Activated CD8-positive, alpha-beta T cell treated with anti-CD3 and anti-CD28 coated beads for 36 hours (primary cell): ENCODE measurements at regions of chr10 and their contacts with region 1.

Region 1: GRCh38 chr10:100728928-100729861 is 16.2 kb upstream of the PAX2 start:
- DNase-seq: peak; percentile 68
- ATAC-seq: peak; percentile 63
- H3K4me3 Mint-ChIP-seq: peak overlapping the region; percentile 7
- H3K27ac Mint-ChIP-seq: no peak overlapping the region
- H3K4me1 Mint-ChIP-seq: peaks cover 24% of the 10 kb centered on the region
- H3K27me3 Mint-ChIP-seq: peaks cover 80% of the 10 kb centered on the region
- CTCF ChIP-seq: no peak

Region 2: DNA sequence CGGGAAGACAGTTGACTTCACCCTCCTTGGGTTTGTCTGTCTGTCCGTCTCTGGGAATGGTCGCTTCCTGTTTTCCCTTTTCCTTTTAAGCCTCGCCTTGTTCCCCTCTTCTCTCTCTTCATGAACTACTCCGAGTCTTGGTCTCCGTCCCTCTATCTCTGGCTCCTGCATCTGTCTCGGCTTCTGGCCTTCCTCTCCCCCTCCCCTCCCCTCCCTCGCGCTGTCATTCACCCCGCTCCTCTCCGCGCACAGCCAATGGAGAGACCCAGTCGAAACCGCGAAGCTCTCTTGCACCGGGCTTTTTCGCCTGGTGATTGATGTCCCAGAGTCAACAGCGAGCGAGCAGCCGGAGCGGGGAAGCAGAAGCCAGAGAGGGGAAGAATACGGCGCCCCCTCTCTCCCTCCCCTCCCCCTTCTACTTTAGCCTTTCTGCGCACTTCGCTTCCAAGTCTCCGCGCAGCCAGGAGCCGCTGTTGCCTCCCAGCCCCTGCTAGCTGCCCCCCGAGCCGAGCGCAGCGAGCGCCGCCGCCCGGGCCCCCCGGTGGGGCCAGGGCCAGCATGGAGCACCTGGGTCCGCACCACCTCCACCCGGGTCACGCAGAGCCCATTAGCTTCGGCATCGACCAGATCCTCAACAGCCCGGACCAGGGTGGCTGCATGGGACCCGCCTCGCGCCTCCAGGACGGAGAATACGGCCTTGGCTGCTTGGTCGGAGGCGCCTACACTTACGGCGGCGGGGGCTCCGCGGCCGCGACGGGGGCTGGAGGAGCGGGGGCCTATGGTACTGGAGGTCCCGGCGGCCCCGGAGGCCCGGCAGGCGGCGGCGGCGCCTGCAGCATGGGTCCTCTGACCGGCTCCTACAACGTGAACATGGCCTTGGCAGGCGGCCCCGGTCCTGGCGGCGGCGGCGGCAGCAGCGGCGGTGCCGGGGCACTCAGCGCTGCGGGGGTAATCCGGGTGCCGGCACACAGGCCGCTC is 402.1 kb after region 1 on chr10 and contains the start of gene TLX1:
- CTCF ChIA-PET with region 1: no interaction called
- POLR2A ChIA-PET with region 1: no interaction called
- intact Hi-C with region 1: loop called (anchors 10 kb)
- DNase-seq: no peak
- ATAC-seq: no peak
- H3K4me3 Mint-ChIP-seq: peak within 1 kb of the TSS; percentile 6
- H3K27ac Mint-ChIP-seq: no peak within 1 kb of the TSS
- H3K4me1 Mint-ChIP-seq: peaks cover 28% of the 10 kb centered on the region
- H3K27me3 Mint-ChIP-seq: peaks cover 78% of the 10 kb centered on the region
- CTCF ChIP-seq: no peak
- total RNA-seq, gene TLX1: not detected